K562 (cell line): ENCODE measurements at regions of chr16 and their contacts with region 1.

Region 1: GRCh38 chr16:85114909-85115567 is 2.8 kb upstream of the CIBAR2 start:
- DNase-seq: peak; percentile 92 to 94 (median 93)
- ATAC-seq: peak; percentile 98
- H3K4me3 ChIP-seq: 0 out of 2 replicates have a peak overlapping the region, but pooled peaks have one; percentile 5
- H3K27ac ChIP-seq: peak overlapping the region; percentile 56
- H3K4me1 ChIP-seq: peaks cover 2 to 26% of the 10 kb centered on the region in 2 experiments; a peak in 2 of 5 replicates
- H3K27me3 ChIP-seq: peaks cover 0 to 28% of the 10 kb centered on the region in 2 experiments; a peak in 3 of 5 replicates
- CTCF ChIP-seq: peak; percentile 97 to 100 (median 98)
- EP300 ChIP-seq: no peak
- POLR2A ChIP-seq: no peak
- RAD21 ChIP-seq: peak; percentile 96

Region 2: DNA sequence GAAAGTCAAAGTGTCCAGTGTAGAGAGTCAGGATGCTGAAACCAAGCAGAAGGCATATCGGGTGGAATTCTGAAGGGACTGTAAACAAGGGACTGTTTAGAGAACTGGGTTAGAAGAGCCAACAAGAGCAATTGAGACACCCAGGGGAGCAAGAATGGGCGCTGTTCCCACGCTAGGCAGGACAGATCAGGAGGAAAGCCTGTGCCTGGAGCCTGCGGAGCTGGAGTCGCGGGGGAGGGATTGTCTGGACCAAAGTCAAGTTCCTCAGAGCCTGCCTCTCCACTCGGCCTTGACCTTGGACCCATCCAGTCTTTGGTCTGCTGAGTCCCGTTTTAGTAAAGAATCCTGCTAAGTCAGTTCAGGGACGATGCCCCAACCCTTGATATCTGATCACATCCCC is 481.4 kb before region 1 on chr16:
- CTCF ChIA-PET with region 1: no interaction called
- POLR2A ChIA-PET with region 1: no interaction called
- in situ Hi-C with region 1: no loop called
- intact Hi-C with region 1: no loop called
- DNase-seq: no peak
- ATAC-seq: peak; percentile 53
- H3K4me3 ChIP-seq: no peak overlapping the region
- H3K27ac ChIP-seq: no peak overlapping the region
- H3K4me1 ChIP-seq: peaks cover 0 to 8% of the 10 kb centered on the region in 2 experiments; a peak in 2 of 5 replicates
- H3K27me3 ChIP-seq: peaks cover 5 to 10% of the 10 kb centered on the region in 2 experiments; a peak in 2 of 5 replicates
- CTCF ChIP-seq: no peak
- EP300 ChIP-seq: no peak
- POLR2A ChIP-seq: no peak
- RAD21 ChIP-seq: no peak

Region 3: GRCh38 chr16:85172455-85173145 is 57.6 kb after region 1 on chr16:
- CTCF ChIA-PET with region 1: no interaction called
- POLR2A ChIA-PET with region 1: interaction called, 3 read pairs
- in situ Hi-C with region 1: no loop called
- intact Hi-C with region 1: loop called (anchors 2 kb)
- DNase-seq: peak; percentile 53 to 69 (median 64)
- ATAC-seq: peak; percentile 36
- H3K4me3 ChIP-seq: peak overlapping the region; percentile 45
- H3K27ac ChIP-seq: peak overlapping the region; percentile 71
- H3K4me1 ChIP-seq: peaks cover 43 to 83% of the 10 kb centered on the region in 2 experiments
- H3K27me3 ChIP-seq: no peaks in the 10 kb centered on the region
- CTCF ChIP-seq: peak; percentile 71 to 96 (median 72)
- EP300 ChIP-seq: no peak
- POLR2A ChIP-seq: no peak
- RAD21 ChIP-seq: peak in 1 of 2 experiments; percentile 9; a peak in 1 of 4 replicates

Region 4: GRCh38 chr16:85245307-85246172 is 130.5 kb after region 1 on chr16:
- CTCF ChIA-PET with region 1: no interaction called
- POLR2A ChIA-PET with region 1: interaction called, 3 read pairs
- in situ Hi-C with region 1: loop called (anchors 10 kb)
- intact Hi-C with region 1: loop called (anchors 5 kb)
- DNase-seq: peak; percentile 76 to 86 (median 82)
- ATAC-seq: peak; percentile 90
- H3K4me3 ChIP-seq: no peak overlapping the region
- H3K27ac ChIP-seq: no peak overlapping the region
- H3K4me1 ChIP-seq: peaks cover 0 to 46% of the 10 kb centered on the region in 2 experiments; a peak in 3 of 5 replicates
- H3K27me3 ChIP-seq: no peaks in the 10 kb centered on the region
- CTCF ChIP-seq: peak; percentile 89 to 97 (median 92)
- EP300 ChIP-seq: no peak
- POLR2A ChIP-seq: no peak
- RAD21 ChIP-seq: peak; percentile 69 to 78

Region 5: DNA sequence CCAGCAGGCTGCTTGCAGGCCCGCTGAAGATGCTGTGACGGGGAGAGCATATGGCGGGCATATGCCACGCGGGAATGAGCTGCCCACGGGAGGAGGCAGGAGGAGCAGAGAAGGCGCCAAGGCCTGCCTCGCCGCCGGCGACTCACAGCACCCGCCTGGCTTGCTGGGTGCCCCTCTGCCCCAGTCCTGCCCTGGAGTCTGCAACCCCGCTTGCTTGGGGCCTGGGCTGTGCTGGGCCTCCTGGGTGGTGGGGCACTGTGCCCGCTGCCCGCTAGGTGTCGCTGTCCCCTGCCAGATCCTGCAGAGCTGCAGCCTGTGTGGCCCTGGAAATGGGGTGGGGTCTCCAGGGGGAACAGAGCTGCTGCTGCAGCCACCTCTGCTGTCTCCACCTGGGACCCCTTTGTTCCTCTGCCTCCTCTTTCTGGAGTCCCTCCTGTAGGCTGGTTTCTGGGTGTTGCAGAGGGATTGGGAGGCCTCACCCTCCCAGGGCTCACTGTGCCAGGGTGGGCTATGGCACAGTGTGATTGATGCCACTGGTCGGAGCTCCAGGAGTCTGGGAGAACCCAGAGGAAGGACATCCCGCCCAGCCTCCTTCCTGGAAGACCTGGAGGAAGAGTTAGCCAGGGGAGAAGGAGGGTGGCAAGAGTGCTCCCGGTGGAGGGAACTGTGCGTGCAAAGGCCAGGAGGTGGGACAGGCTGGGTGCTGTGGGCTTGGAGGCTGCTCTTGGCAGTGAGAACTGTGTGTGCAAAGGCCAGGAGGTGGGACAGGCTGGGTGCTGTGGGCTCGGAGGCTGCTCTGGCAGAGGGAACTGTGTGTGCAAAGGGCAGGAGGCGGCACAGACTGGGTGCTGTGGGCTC is 138.3 kb after region 1 on chr16:
- CTCF ChIA-PET with region 1: no interaction called
- POLR2A ChIA-PET with region 1: interaction called, 4 read pairs
- in situ Hi-C with region 1: loop called (anchors 10 kb)
- intact Hi-C with region 1: loop called (anchors 5 kb)
- DNase-seq: peak; percentile 76 to 90 (median 88)
- ATAC-seq: peak; percentile 97
- H3K4me3 ChIP-seq: no peak overlapping the region
- H3K27ac ChIP-seq: no peak overlapping the region
- H3K4me1 ChIP-seq: peaks cover 2 to 45% of the 10 kb centered on the region in 2 experiments; a peak in 3 of 5 replicates
- H3K27me3 ChIP-seq: no peaks in the 10 kb centered on the region
- CTCF ChIP-seq: peak; percentile 90 to 97 (median 91)
- EP300 ChIP-seq: no peak
- POLR2A ChIP-seq: no peak
- RAD21 ChIP-seq: peak; percentile 48 to 69

Region 6: DNA sequence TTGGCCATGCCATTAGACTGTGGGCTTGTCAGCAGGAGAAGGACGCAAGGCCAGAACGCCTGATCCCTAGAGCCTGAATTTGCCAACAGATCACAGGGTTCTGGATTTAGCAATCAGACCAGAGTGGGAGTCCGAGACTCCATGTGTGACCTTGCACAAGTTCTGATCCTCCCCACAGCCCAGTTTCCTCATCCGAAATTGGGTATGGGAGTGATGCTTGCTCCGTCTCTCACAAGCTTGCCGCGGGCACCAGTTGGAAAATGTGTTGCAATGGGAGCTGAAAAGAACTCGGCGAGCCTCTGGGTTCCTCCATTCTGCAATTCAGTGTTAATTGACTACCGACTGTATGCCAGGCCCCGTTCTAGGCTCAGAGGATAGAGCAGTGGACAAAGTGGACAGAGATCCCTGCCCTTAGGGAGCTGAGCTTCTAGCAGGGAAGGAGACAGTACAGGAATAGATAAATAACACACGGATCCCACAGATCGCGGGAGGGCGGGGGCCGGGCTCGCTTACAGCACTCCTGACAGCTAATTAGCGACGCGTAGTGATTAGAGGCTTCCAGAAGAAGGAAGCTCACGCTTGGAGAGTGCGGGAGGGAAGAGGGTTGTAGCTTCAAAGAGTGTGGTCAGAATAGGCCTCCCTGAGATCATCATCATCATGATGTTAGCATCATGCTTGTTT is 147.7 kb after region 1 on chr16:
- CTCF ChIA-PET with region 1: no interaction called
- POLR2A ChIA-PET with region 1: no interaction called
- in situ Hi-C with region 1: loop called (anchors 10 kb)
- intact Hi-C with region 1: loop called (anchors 5 kb)
- DNase-seq: peak in 1 of 4 experiments; percentile 44
- ATAC-seq: peak; percentile 24
- H3K4me3 ChIP-seq: no peak overlapping the region
- H3K27ac ChIP-seq: no peak overlapping the region
- H3K4me1 ChIP-seq: peaks cover 17 to 71% of the 10 kb centered on the region in 2 experiments; a peak in 4 of 5 replicates
- H3K27me3 ChIP-seq: no peaks in the 10 kb centered on the region
- CTCF ChIP-seq: no peak
- EP300 ChIP-seq: no peak
- POLR2A ChIP-seq: no peak
- RAD21 ChIP-seq: no peak

Region 7: GRCh38 chr16:85369741-85370528 is 254.9 kb after region 1 on chr16:
- CTCF ChIA-PET with region 1: no interaction called
- POLR2A ChIA-PET with region 1: no interaction called
- in situ Hi-C with region 1: loop called (anchors 10 kb)
- intact Hi-C with region 1: no loop called
- DNase-seq: peak; percentile 80 to 90 (median 87)
- ATAC-seq: peak; percentile 90
- H3K4me3 ChIP-seq: no peak overlapping the region
- H3K27ac ChIP-seq: no peak overlapping the region; the same call in 2 of the 3 replicates
- H3K4me1 ChIP-seq: peaks cover 42 to 89% of the 10 kb centered on the region in 2 experiments
- H3K27me3 ChIP-seq: no peaks in the 10 kb centered on the region
- CTCF ChIP-seq: peak; percentile 89 to 96 (median 91)
- EP300 ChIP-seq: no peak; the same call in 1 of the 2 replicates
- POLR2A ChIP-seq: no peak
- RAD21 ChIP-seq: peak; percentile 84 to 90

Region 8: GRCh38 chr16:85612801-85613603 is 498.0 kb after region 1 on chr16 and contains the start of gene GSE1:
- CTCF ChIA-PET with region 1: no interaction called
- POLR2A ChIA-PET with region 1: no interaction called
- in situ Hi-C with region 1: no loop called
- intact Hi-C with region 1: no loop called
- DNase-seq: peak; percentile 70 to 98 (median 82)
- ATAC-seq: peak; percentile 45
- H3K4me3 ChIP-seq: peak within 1 kb of the TSS; percentile 85
- H3K27ac ChIP-seq: peak within 1 kb of the TSS; percentile 99
- H3K4me1 ChIP-seq: peaks cover 54 to 87% of the 10 kb centered on the region in 2 experiments
- H3K27me3 ChIP-seq: no peaks in the 10 kb centered on the region
- CTCF ChIP-seq: no peak
- EP300 ChIP-seq: peak; percentile 95
- POLR2A ChIP-seq: peak; percentile 80
- RAD21 ChIP-seq: peak in 1 of 2 experiments; percentile 10; a peak in 1 of 4 replicates
- polyA plus RNA-seq, gene GSE1: 12.2 to 15.8 TPM

Region 9: DNA sequence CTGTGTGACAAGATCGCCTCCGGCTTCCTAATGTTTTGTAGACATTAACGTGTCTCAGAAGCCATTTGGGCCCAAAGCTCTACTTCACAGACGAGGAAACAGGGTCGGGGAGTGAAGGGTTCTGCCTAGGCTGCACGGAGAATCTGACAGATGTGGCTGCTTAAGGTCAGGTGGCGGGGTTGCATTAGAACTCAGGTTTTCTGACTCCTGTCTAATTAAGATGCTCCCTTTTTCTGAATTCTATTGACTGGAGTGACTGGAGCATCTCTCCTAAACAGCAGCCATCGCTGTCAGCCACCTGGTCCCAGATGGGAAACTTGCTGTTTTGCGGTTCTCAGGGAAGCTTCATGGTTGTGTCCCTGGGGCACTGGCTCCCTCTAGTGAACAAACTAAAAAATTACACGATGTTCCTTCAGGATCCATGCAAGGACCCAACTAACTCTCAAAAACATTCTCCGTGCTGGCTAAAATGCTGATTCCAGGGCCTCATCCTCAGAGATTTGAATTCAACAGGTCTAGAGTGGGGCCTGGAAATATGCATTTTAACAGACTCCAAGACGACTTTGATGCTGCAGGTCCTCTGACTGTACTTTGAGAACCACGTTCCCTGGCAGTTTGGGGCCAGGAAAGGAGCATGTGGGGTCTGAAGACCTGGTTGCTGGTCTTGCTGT is 901.3 kb after region 1 on chr16:
- CTCF ChIA-PET with region 1: no interaction called
- POLR2A ChIA-PET with region 1: no interaction called
- in situ Hi-C with region 1: loop called (anchors 25 kb)
- intact Hi-C with region 1: no loop called
- DNase-seq: peak; percentile 54 to 78 (median 69)
- ATAC-seq: peak; percentile 76
- H3K4me3 ChIP-seq: no peak overlapping the region
- H3K27ac ChIP-seq: no peak overlapping the region
- H3K4me1 ChIP-seq: no peaks in the 10 kb centered on the region
- H3K27me3 ChIP-seq: no peaks in the 10 kb centered on the region
- CTCF ChIP-seq: peak; percentile 69 to 79 (median 72); a peak in 5 of 6 replicates
- EP300 ChIP-seq: no peak
- POLR2A ChIP-seq: no peak
- RAD21 ChIP-seq: peak; percentile 59 to 77

Region 10: GRCh38 chr16:86222965-86223551 is 1108.0 kb after region 1 on chr16:
- CTCF ChIA-PET with region 1: no interaction called
- POLR2A ChIA-PET with region 1: no interaction called
- in situ Hi-C with region 1: no loop called
- intact Hi-C with region 1: no loop called
- DNase-seq: no peak
- ATAC-seq: no peak
- H3K4me3 ChIP-seq: no peak overlapping the region
- H3K27ac ChIP-seq: no peak overlapping the region
- H3K4me1 ChIP-seq: no peaks in the 10 kb centered on the region
- H3K27me3 ChIP-seq: peaks cover 16 to 47% of the 10 kb centered on the region in 2 experiments; a peak in 3 of 5 replicates
- CTCF ChIP-seq: no peak
- EP300 ChIP-seq: no peak
- POLR2A ChIP-seq: no peak
- RAD21 ChIP-seq: no peak